AG04450 (cell line): ENCODE measurements at regions of chr4 and their contacts with region 1.

Region 1: DNA sequence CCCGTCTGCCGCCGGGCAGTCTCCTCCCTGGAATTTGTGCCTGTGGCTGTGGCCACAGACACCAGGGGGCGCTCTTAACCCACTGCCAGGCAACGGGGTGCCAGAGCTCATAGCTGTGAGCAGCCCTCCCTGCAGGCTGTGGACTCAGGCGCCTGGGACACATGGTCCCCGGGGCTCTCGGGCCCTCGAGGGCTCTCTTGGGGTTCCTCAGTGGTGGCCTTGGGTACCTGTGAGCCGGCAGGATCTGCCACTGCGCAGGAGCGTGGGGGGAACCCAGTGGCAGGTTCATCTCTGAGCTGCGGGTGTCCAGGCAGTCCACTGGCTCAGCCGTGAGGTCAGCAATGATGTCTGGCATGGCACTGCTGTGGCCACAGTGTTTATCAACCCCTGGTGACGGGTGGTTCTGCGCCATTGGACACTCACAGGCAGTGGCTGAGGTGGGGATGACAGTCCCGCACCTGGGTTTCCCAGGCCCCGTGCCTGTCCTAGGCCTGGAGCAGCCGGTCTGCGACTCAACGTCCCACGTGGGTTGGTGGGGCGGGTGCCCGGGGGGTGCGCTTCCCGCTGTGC is 37.2 kb downstream of the PCGF3 start:
- DNase-seq: no peak
- H3K4me3 ChIP-seq: no peak overlapping the region
- H3K27ac ChIP-seq: no peak overlapping the region
- H3K27me3 ChIP-seq: no peaks in the 10 kb centered on the region
- CTCF ChIP-seq: peak; percentile 84

Region 2: DNA sequence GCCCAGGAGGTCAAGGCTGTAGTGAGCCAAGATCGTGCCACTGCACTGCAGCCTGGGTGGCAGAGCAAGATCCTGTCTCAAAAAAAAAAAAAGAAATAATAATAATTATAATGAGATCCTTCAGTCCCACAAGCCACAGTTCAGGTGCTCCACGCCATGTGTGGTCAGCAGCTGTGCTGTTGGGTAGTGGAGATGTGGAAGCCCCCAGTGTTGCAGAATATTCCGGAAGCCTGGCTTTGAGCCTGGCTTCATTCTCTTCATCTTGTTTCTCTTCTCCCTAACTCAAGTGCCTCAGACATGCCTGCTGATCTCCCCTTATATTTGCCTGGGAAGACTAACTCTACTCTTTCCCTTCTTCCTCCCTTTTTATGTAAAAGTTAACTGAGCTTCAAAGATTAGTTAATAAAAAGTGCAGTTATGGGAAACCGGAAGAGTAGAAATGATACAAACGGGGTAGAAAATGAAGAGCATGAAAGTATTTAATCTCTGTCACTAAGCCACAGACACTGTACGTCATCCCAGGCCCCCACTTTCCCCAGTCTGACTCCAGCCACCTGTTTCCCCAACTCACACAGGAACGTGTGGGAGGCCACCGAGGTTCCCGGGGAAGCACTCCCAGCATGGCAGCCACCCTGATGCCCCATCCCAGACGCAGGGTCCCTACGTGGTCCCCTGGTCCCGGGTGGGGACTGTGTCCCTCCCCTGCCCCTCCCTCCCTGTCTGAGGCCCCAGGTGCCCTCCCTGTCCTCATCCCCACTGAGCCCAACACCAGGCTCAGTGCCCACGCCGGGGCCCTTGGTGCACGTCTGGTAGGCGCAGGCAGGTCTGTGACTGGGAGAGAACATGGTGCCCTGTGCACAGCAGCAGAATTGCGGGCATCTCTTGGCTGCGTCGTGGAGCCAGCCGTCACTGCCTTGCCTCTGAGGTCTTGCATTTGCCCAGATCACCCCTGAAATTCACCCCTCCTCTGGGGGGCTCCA is 13.2 kb before region 1 on chr4:
- CTCF ChIA-PET with region 1: interaction called, 16 read pairs
- POLR2A ChIA-PET with region 1: interaction called, 3 read pairs
- DNase-seq: no peak
- H3K4me3 ChIP-seq: no peak overlapping the region
- H3K27ac ChIP-seq: no peak overlapping the region
- H3K27me3 ChIP-seq: no peaks in the 10 kb centered on the region
- CTCF ChIP-seq: no peak